ENCODE measurements at regions of chr1 and their contacts with region 1.

Region 1: GRCh38 chr1:67214420-67215174 is 48.3 kb downstream of the IL23R start:
- DNase-seq: peak; percentile 82
- H3K4me3 Mint-ChIP-seq: no peak overlapping the region
- H3K27ac Mint-ChIP-seq: peak overlapping the region; percentile 74
- H3K4me1 Mint-ChIP-seq: peaks cover 64% of the 10 kb centered on the region
- H3K27me3 Mint-ChIP-seq: no peaks in the 10 kb centered on the region

Region 2: GRCh38 chr1:66996018-66996682 is 218.4 kb before region 1 on chr1:
- CTCF ChIA-PET with region 1: interaction called, 27 read pairs
- intact Hi-C with region 1: loop called (anchors 1 kb)
- DNase-seq: peak; percentile 89
- H3K4me3 Mint-ChIP-seq: no peak overlapping the region
- H3K27ac Mint-ChIP-seq: no peak overlapping the region
- H3K4me1 Mint-ChIP-seq: peaks cover 26% of the 10 kb centered on the region
- H3K27me3 Mint-ChIP-seq: no peaks in the 10 kb centered on the region

Region 3: DNA sequence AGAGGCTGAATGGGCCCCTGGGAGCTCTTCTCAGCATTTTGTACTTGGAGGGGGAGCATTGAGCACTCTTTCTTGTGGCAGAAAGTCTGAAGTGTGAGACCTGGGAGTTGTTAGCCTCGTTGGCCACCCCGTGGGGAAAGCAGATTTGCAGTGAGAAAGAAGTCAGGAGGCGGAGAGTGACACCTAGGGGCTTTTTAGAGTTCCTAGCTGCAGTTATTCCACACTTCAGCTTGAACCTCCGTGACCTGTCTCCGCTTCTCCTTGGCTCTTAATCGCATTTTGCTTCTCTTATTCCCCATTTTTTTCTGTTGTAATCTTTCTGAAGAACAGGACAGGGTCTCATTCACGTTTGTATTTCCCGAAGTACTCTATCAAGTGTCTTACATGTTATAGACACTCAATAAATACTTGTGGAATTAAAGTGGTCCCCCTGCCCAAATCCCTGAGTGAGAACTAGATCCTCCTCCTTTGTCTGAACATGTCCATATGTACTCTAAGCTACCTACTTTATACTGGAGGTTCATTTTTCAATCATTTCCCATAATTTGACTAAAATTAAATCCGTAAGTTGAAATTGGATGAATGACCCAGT is 65.3 kb before region 1 on chr1:
- CTCF ChIA-PET with region 1: interaction called, 147 read pairs
- intact Hi-C with region 1: loop called (anchors 1 kb)
- DNase-seq: peak; percentile 85
- H3K4me3 Mint-ChIP-seq: no peak overlapping the region
- H3K27ac Mint-ChIP-seq: no peak overlapping the region
- H3K4me1 Mint-ChIP-seq: peaks cover 42% of the 10 kb centered on the region
- H3K27me3 Mint-ChIP-seq: peaks cover 5% of the 10 kb centered on the region

Region 4: DNA sequence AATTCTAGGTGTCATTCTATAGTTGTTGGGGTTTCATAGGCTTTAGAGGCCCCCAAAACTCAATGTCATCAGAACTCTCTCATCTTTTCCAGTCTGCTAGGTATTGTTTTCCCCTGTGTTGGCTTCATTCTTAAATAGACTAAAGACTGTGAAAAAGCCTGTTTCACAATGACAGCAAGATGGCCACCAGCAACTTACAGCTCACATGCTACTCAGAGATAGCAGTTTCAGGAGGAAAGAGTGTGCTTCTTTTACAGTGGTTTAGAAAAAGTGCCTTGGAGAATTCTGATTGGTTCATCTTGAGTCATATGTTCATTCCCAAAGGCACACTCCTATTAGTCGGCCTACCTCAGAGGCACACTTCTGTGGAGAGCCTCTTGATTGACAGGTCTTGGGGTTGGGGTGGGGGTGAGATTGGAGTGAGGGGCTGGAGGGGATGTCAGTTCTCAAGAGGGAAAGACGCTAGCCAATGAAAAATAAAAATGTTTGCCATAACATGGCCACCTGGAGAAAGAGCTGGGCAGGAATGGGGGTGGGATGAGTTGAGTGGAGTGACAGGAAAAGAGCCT is 39.8 kb before region 1 on chr1:
- CTCF ChIA-PET with region 1: interaction called, 147 read pairs
- intact Hi-C with region 1: loop called (anchors 1 kb)
- DNase-seq: peak; percentile 63
- H3K4me3 Mint-ChIP-seq: peak overlapping the region; percentile 7
- H3K27ac Mint-ChIP-seq: peak overlapping the region; percentile 99
- H3K4me1 Mint-ChIP-seq: peaks cover 81% of the 10 kb centered on the region
- H3K27me3 Mint-ChIP-seq: no peaks in the 10 kb centered on the region

Region 5: GRCh38 chr1:67194209-67194863 is 20.3 kb before region 1 on chr1:
- CTCF ChIA-PET with region 1: interaction called, 84 read pairs
- intact Hi-C with region 1: loop called (anchors 1 kb)
- DNase-seq: no peak
- H3K4me3 Mint-ChIP-seq: no peak overlapping the region
- H3K27ac Mint-ChIP-seq: no peak overlapping the region
- H3K4me1 Mint-ChIP-seq: peaks cover 39% of the 10 kb centered on the region
- H3K27me3 Mint-ChIP-seq: no peaks in the 10 kb centered on the region

Region 6: DNA sequence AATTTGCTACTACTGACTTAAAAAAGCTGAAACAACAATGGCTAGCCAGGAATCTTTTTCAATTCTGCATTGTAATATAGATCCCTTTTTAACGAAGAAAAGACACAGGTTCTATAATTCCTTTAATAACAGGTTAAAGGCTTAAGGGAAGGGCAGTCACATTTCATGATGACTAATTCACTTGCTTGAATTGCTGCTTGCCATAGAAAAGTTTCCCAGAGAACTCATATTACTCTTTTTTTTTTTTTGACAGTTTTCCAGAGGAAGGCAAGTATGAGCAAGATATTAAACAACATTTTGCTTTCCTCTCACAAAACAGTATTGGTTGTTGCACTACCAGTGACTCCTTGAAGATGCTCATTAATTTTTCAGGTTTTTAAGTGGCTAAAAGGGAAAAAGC is 12.6 kb after region 1 on chr1:
- CTCF ChIA-PET with region 1: interaction called, 28 read pairs
- intact Hi-C with region 1: no loop called
- DNase-seq: no peak
- H3K4me3 Mint-ChIP-seq: no peak overlapping the region
- H3K27ac Mint-ChIP-seq: no peak overlapping the region
- H3K4me1 Mint-ChIP-seq: peaks cover 28% of the 10 kb centered on the region
- H3K27me3 Mint-ChIP-seq: no peaks in the 10 kb centered on the region

Region 7: GRCh38 chr1:67489643-67490042 is 275.0 kb after region 1 on chr1:
- CTCF ChIA-PET with region 1: interaction called, 39 read pairs
- intact Hi-C with region 1: no loop called
- DNase-seq: peak; percentile 40
- H3K4me3 Mint-ChIP-seq: no peak overlapping the region
- H3K27ac Mint-ChIP-seq: no peak overlapping the region
- H3K4me1 Mint-ChIP-seq: peaks cover under 1% of the 10 kb centered on the region
- H3K27me3 Mint-ChIP-seq: no peaks in the 10 kb centered on the region